Activated CD4-positive, alpha-beta T cell treated with anti-CD3 and anti-CD28 coated beads for 36 hours (primary cell): ENCODE measurements at regions of chr3 and their contacts with region 1.

Region 1: DNA sequence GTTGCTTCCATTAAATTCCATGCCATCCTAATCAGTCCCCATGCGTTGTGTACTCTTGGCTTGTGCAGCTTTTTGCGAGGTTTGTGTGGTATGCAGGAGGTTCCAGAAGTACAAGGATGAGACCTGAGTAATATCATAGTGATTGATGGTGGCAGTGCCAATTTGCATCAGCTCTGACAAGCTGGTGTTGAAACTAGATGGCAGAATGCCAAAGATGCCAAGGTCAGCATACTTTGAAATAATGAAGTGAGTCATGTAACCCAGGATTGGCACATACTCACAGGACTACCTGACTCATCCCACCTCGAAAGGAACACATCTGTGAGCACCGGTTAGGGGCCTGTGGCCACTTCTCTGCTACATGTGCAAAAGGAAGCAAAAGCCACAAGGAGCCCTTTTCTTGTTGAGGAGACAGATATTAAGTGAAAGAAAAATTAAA is 14.3 kb downstream of the KAT2B start:
- DNase-seq: peak; percentile 83
- ATAC-seq: peak; percentile 85
- H3K4me3 Mint-ChIP-seq: no peak overlapping the region
- H3K27ac Mint-ChIP-seq: no peak overlapping the region
- H3K4me1 Mint-ChIP-seq: peaks cover 38% of the 10 kb centered on the region
- H3K27me3 Mint-ChIP-seq: no peaks in the 10 kb centered on the region

Region 2: GRCh38 chr3:18872466-18872865 is 1182.1 kb before region 1 on chr3:
- CTCF ChIA-PET with region 1: no interaction called
- POLR2A ChIA-PET with region 1: no interaction called
- intact Hi-C with region 1: loop called in 1 of 2 experiments (anchors 5 kb)
- DNase-seq: no peak
- ATAC-seq: peak; percentile 43
- H3K4me3 Mint-ChIP-seq: no peak overlapping the region
- H3K27ac Mint-ChIP-seq: peak overlapping the region; percentile 20
- H3K4me1 Mint-ChIP-seq: peaks cover 67% of the 10 kb centered on the region
- H3K27me3 Mint-ChIP-seq: peaks cover 2% of the 10 kb centered on the region

Region 3: GRCh38 chr3:19937459-19938294 is 116.9 kb before region 1 on chr3:
- CTCF ChIA-PET with region 1: interaction called, 5 read pairs
- POLR2A ChIA-PET with region 1: interaction called, 11 read pairs
- intact Hi-C with region 1: loop called in 1 of 2 experiments (anchors 1 kb)
- DNase-seq: peak; percentile 38
- ATAC-seq: peak; percentile 94
- H3K4me3 Mint-ChIP-seq: no peak overlapping the region
- H3K27ac Mint-ChIP-seq: peak overlapping the region; percentile 62
- H3K4me1 Mint-ChIP-seq: peaks cover 25% of the 10 kb centered on the region
- H3K27me3 Mint-ChIP-seq: peaks cover 10% of the 10 kb centered on the region

Region 4: DNA sequence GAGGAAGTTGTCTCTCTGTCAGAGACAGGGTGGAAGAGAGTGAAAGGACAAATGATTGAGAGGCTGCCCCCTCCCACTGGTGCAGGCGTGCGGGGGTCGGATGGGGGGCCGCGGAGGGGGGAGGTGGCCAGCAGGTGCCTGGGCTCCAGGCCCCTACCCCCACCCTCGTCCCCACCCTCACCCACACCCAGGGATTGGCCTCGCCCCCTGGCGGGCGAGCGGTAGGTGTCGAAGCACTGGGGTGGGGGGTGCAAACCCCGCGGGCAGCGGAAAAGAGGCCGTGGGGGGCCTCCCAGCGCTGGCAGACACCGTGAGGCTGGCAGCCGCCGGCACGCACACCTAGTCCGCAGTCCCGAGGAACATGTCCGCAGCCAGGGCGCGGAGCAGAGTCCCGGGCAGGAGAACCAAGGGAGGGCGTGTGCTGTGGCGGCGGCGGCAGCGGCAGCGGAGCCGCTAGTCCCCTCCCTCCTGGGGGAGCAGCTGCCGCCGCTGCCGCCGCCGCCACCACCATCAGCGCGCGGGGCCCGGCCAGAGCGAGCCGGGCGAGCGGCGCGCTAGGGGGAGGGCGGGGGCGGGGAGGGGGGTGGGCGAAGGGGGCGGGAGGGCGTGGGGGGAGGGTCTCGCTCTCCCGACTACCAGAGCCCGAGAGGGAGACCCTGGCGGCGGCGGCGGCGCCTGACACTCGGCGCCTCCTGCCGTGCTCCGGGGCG is 14.6 kb before region 1 on chr3 and contains the start of gene KAT2B:
- CTCF ChIA-PET with region 1: interaction called, 24 read pairs
- POLR2A ChIA-PET with region 1: interaction called, 19 read pairs
- intact Hi-C with region 1: loop called (anchors 1 kb)
- DNase-seq: peak; percentile 91
- ATAC-seq: peak; percentile 68
- H3K4me3 Mint-ChIP-seq: peak within 1 kb of the TSS; percentile 95
- H3K27ac Mint-ChIP-seq: peak within 1 kb of the TSS; percentile 93
- H3K4me1 Mint-ChIP-seq: peaks cover 50% of the 10 kb centered on the region
- H3K27me3 Mint-ChIP-seq: no peaks in the 10 kb centered on the region
- total RNA-seq, gene KAT2B: 17.2 to 18.5 TPM

Region 5: DNA sequence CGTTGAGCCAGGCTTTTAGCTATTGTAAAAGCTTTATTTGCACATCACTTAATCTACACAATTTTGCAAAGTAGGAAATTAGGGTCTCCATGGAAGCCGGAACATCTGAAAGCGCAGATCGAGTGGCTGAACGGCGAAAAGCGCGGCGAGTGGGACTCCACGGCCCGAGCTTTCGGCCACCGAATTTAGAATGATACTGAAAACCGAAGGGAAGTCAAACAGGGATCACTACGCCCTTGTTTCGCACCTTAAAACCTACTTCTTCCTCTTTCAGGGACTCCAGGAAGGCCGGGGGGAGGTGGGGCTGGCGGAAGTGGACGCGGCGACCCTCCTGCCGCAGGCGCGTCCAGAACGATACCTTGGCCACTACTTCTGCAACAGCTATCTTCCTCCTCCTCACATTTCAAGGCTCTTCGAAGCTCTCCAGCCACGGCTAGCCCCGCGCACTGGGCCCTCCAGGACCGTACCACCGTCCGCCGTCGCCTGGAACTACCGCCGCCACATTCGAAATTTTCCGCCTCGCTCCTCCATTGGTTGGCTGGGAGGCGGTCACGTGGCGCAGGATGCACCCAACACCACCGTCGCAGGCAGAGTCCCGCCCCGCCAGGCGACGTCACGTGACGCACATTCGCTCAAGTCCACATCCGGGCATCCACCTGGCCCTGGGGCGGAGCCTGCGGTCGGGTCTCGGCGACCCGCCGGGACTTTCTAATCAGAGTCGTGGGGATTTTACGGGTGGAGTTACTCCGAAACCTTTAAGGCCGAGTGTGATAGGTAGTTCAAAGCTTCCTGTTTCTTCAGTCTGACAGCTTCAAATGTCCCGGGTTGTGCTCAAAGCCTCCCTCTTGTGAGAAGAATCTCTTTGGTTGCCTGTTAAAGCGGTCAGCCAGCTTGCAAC is 131.4 kb after region 1 on chr3 and contains the start of gene SGO1:
- CTCF ChIA-PET with region 1: interaction called, 3 read pairs
- POLR2A ChIA-PET with region 1: no interaction called
- intact Hi-C with region 1: loop called (anchors 1 kb)
- DNase-seq: peak; percentile 100
- ATAC-seq: peak; percentile 94
- H3K4me3 Mint-ChIP-seq: no peak within 1 kb of the TSS
- H3K27ac Mint-ChIP-seq: no peak within 1 kb of the TSS
- H3K4me1 Mint-ChIP-seq: peaks cover 6% of the 10 kb centered on the region
- H3K27me3 Mint-ChIP-seq: no peaks in the 10 kb centered on the region
- total RNA-seq, gene SGO1: 29.4 to 39.2 TPM